MCF 10A (cell line): ENCODE measurements at regions of chr1 and their contacts with region 1.

Region 1: DNA sequence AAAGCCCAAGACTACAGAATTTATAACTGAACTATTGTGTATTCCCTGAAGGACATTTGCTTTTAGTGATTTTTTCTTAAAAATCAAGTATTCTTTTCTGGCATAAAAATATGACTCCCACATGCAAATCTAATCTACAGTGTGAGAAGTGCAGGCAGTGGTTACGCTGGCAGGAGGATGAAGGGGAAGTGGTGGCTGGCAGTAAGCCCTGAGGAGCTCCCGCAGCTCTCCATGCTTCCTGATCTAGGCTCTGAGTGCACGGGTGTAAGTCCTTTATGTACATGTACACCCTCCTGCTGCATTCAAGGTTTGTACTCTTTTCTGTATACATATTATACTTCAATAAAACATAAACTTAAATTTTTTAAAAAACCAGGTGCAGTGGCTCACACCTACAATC is 67.5 kb upstream of the PRDX6 start:
- DNase-seq: peak; percentile 69
- H3K4me3 Mint-ChIP-seq: no peak overlapping the region
- H3K27ac Mint-ChIP-seq: peak overlapping the region; percentile 31
- H3K4me1 Mint-ChIP-seq: peaks cover 31% of the 10 kb centered on the region
- H3K27me3 Mint-ChIP-seq: no peaks in the 10 kb centered on the region
- CTCF ChIP-seq: no peak

Region 2: DNA sequence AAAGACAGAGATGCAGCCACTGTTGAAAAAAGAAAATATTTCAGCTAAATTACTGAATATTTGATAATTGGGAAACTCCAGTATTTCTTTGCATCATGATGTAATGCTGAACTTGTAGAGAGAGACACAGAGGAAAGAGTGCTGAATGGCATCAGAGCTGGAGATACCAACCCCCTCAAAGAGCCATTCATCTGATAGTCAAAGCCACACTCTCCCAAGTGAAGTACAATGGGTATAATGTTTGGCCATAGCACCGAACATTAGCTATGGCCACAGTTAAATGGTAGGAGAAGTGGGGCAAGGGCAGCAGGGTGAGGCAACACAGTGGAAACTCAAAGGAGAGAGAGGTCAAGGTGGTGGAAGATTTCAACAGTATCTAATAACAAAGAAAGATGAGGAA is 95.0 kb before region 1 on chr1:
- CTCF ChIA-PET with region 1: no interaction called
- POLR2A ChIA-PET with region 1: no interaction called
- intact Hi-C with region 1: no loop called
- DNase-seq: no peak
- H3K4me3 Mint-ChIP-seq: no peak overlapping the region
- H3K27ac Mint-ChIP-seq: no peak overlapping the region
- H3K4me1 Mint-ChIP-seq: no peaks in the 10 kb centered on the region
- H3K27me3 Mint-ChIP-seq: no peaks in the 10 kb centered on the region
- CTCF ChIP-seq: no peak

Region 3: GRCh38 chr1:173420330-173420806 is 10.8 kb after region 1 on chr1:
- CTCF ChIA-PET with region 1: interaction called, 25 read pairs
- POLR2A ChIA-PET with region 1: interaction called, 5 read pairs
- intact Hi-C with region 1: no loop called
- DNase-seq: peak; percentile 91
- H3K4me3 Mint-ChIP-seq: no peak overlapping the region
- H3K27ac Mint-ChIP-seq: peak overlapping the region; percentile 9
- H3K4me1 Mint-ChIP-seq: peaks cover 22% of the 10 kb centered on the region
- H3K27me3 Mint-ChIP-seq: no peaks in the 10 kb centered on the region
- CTCF ChIP-seq: peak; percentile 94